Dorsolateral prefrontal cortex (tissue), 120 donors: ENCODE measurements at regions of chr15 and their contacts with region 1.

Region 1: GRCh38 chr15:90320061-90320884 is 31.8 kb upstream of the ZNF774 start:
- DNase-seq: peak; percentile 43 to 90 (median 76)
- H3K4me3 ChIP-seq: peak overlapping the region in 31 of 59 donors; percentile 0 to 48 (median 26)
- H3K27ac ChIP-seq: peak overlapping the region in 26 of 59 donors; percentile 0 to 66 (median 38)
- H3K27me3 ChIP-seq: no peaks in the 10 kb centered on the region
- CTCF ChIP-seq: peak; percentile 89 to 100 (median 99)

Region 2: DNA sequence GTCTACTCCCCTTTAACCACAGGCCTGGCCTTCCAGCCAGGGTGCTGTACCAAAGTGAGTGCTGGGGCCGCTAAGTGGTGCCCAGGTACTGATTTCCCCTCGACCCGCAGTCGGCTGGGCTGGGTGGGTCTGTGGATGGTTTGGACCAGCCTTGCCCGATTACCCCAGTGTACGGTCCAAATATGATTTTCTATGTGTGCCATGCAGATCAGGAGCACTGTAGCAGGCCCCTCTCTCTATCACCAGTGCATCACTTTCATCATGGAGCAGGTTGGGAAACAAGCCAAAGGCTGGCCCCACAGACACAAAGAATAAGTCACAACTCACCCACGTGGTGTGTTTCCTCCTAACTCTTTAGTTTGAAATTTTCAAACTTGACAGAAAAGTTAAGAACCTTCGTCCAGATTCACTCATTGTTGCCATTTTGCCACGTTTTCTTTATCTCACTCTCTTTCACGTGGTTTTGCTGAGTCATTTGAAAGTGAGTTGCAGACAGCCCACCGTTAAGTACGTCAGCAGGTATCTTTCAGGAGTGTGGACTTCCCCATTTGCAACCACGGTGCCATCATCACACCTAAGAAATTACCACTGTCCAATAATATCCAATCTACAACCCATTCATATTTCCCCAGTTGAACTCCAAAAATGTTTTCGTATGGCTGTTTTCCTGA is 282.2 kb before region 1 on chr15:
- intact Hi-C with region 1: no loop called
- DNase-seq: peak in 2 of 10 donors; percentile 26 to 36
- H3K4me3 ChIP-seq: no peak overlapping the region
- H3K27ac ChIP-seq: peak overlapping the region in 13 of 59 donors; percentile 2 to 69 (median 28)
- H3K27me3 ChIP-seq: no peaks in the 10 kb centered on the region
- CTCF ChIP-seq: no peak

Region 3: DNA sequence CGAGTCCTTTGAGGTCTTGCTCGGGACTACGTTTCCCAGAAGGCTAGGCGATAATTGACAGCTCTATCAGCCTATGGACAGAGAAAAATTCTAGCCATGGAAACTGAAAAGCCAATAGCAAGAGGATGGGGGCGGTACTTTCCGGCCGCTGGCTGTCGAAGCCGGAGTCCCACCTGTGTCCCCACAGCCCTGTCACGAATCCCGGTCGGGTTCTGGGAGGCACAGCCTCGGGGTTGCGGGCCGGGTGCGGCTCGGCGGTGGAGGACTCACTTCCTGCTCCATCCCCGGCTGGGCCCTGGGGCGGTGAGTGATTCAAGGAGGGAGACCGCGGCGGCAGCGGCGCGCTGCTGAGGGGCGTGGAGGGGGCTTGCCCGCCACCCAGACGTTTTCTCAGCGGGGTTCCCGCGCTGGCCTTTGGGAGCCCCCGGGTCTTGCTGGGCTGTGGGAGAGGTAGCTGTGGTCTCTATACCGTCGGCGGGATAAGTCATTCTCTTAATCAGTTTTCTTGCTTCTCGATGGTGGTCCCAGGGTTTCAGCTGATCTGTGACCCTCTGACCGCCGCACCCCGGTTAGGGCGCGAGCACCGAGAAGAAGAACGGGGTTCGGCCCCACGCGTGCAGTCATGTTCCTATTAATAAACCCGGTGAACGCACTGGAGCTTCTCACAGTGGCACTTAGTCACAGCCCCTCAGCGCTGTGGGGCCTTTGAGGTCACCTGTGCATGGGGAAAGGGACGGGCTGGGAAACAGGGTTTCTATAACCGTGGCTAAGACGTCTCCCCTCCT is 32.0 kb after region 1 on chr15 and contains the start of gene ZNF774:
- intact Hi-C with region 1: loop called in 1 of 2 experiments (anchors 2 kb)
- DNase-seq: peak; percentile 71 to 93 (median 90)
- H3K4me3 ChIP-seq: peak within 1 kb of the TSS; percentile 59 to 100 (median 90)
- H3K27ac ChIP-seq: peak within 1 kb of the TSS in 46 of 59 donors; percentile 5 to 91 (median 66)
- H3K27me3 ChIP-seq: no peaks in the 10 kb centered on the region
- CTCF ChIP-seq: peak in 15 of 56 donors; percentile 8 to 46 (median 22)
- total RNA-seq, gene ZNF774: 10.6 to 38.4 (median 20.8) TPM

Region 4: DNA sequence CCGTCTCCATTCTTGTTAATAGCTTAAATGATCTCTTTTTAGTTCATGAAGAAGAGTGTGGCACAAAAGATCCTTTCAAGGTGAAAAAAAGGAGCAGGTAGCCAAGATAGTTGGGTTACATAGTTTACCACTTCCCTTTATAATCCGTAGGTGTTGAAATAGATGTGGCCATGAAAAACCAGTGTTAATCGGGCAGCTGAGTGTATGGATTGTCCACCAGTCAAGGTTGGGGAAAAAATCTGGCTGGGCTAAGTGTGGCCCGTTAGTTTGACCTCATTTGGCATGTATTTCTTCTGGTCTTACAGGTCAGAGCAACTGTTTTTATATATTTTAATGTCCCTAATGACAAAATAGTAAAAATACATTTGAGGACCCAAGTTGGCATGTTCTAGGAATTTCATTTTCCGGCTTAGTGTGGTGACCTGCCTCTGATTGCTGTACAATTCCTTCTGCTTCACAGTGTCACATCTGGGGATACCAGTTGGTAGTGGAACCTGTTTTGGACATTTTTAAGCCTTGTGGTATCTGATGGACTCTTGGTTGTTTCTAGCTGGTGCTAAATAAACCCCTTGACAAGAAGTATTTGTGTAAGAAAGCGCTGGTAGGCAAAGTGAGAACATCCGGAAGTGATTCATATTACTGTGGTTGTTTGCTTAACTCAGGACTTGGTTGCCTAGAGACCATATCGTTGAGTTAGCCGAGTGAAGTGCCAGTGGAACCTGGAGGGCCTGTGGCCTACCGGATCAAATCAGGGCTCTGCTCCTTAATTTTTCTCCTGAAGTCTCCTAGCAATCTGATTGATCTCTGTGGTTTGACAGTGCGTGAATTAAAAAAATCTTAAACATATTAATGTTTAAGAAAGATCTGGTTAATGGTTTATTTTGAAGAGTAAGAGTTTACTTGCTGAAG is 80.4 kb after region 1 on chr15:
- intact Hi-C with region 1: no loop called
- DNase-seq: no peak
- H3K4me3 ChIP-seq: peak overlapping the region in 22 of 59 donors; percentile 2 to 38 (median 12)
- H3K27ac ChIP-seq: peak overlapping the region in 58 of 59 donors; percentile 2 to 91 (median 72)
- H3K27me3 ChIP-seq: no peaks in the 10 kb centered on the region
- CTCF ChIP-seq: no peak

Region 5: DNA sequence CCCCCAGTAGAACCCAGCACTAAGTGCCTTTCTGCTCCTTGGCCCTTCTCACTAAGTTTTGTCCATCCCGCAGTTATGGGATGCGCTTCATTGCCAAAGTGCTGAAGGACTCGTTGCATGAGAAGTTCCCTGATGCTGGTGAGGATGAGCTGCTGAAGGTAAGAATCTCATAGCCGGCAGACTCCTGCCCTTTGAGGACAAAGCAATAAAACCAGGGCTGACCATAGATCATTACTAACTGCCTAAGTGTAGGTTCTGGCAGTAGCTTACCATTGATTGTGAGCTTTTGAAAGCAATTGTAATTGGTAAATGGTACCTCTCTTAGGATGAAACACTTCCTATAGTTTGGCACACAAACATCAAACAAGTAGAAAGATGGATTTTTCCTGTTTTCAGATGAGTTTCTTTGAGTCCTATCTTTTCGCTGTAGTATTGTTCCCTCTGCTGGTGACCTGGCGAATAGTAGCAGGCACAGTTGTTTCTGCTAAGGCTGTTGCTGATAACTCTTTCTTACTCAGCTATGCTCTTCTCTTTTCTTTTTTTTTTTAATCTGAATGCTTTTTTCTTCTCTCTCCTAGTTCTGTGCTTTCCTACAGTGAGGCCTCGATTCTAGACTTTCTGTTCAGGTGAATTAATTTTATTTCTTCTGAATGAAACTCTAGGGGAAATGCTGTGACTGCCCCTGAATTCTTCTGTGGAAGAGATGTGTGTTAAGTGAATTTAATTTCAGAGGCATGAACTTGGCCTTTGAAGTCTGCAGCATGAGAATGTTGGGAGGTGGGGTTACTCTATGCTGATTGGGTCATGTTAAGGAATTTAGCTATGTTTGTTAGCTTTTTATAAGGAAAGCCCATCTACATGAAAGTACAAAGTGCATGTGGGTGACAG is 162.1 kb after region 1 on chr15:
- intact Hi-C with region 1: loop called (anchors 1 to 2 kb)
- DNase-seq: peak in 7 of 10 donors; percentile 9 to 88 (median 68)
- H3K4me3 ChIP-seq: no peak overlapping the region
- H3K27ac ChIP-seq: peak overlapping the region in 58 of 59 donors; percentile 5 to 99 (median 84)
- H3K27me3 ChIP-seq: no peaks in the 10 kb centered on the region
- CTCF ChIP-seq: peak; percentile 75 to 98 (median 92)

Region 6: DNA sequence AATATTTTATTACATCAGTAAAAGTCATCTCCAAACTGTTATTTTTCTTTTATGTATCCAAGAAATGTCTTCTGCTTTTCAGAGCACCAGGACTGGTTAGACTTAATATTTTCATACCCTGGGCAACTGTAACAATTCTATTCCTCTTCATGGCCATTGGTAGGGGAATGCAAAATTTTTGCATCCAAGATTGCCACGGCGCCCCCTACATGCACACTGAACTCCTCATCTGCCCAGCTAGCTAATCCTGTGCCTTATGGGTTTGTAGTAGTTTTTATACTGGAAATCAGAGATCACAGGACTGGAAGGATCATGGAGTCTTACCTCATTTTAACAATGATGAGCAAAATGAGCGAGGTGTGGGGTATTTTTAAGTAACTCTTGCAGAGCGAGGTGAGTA is 283.6 kb after region 1 on chr15:
- intact Hi-C with region 1: loop called in 1 of 2 experiments (anchors 10 kb)
- DNase-seq: no peak
- H3K4me3 ChIP-seq: no peak overlapping the region
- H3K27ac ChIP-seq: peak overlapping the region in 4 of 59 donors; percentile 4 to 36 (median 16)
- H3K27me3 ChIP-seq: no peaks in the 10 kb centered on the region
- CTCF ChIP-seq: peak in 43 of 56 donors; percentile 11 to 53 (median 29)

Region 7: GRCh38 chr15:90691982-90692773 is 371.9 kb after region 1 on chr15:
- intact Hi-C with region 1: loop called in 1 of 2 experiments (anchors 10 kb)
- DNase-seq: no peak
- H3K4me3 ChIP-seq: no peak overlapping the region
- H3K27ac ChIP-seq: no peak overlapping the region
- H3K27me3 ChIP-seq: no peaks in the 10 kb centered on the region
- CTCF ChIP-seq: no peak

Region 8: GRCh38 chr15:90879408-90880366 is 559.4 kb after region 1 on chr15:
- intact Hi-C with region 1: loop called in 1 of 2 experiments (anchors 5 kb)
- DNase-seq: no peak
- H3K4me3 ChIP-seq: no peak overlapping the region
- H3K27ac ChIP-seq: peak overlapping the region in 1 of 59 donors; percentile 94
- H3K27me3 ChIP-seq: no peaks in the 10 kb centered on the region
- CTCF ChIP-seq: no peak